ENCODE measurements at regions of chr9 and their contacts with region 1.

Region 1: GRCh38 chr9:127311239-127311741 is 46.7 kb downstream of the GARNL3 start:
- DNase-seq: no peak
- ATAC-seq: peak; percentile 41

Region 2: DNA sequence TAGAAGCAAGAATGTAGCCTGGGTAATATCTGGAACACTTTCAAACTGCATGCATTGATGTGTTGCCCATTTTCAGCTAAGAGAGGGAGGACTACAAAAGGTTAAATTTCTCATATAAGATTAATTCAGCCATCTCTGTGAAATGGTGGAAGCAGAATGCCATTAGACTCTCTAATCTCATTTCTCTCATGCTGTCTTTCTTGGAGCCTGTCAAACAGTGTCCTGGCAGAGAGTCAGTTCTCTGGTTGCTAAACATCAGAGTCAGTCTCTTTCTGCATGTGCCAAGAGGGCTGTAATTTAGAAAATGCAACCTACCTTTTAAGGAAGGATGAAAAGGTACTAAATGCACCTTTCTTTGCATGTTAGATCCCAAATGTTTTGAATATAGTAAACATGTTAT is 47.6 kb before region 1 on chr9:
- intact Hi-C with region 1: loop called (anchors 1 kb)
- DNase-seq: no peak
- ATAC-seq: peak; percentile 71

Region 3: GRCh38 chr9:127293328-127293727 is 18.0 kb before region 1 on chr9:
- intact Hi-C with region 1: no loop called
- DNase-seq: no peak
- ATAC-seq: no peak

Region 4: GRCh38 chr9:127360829-127361228 is 49.5 kb after region 1 on chr9:
- intact Hi-C with region 1: loop called (anchors 2 kb)
- DNase-seq: no peak
- ATAC-seq: peak; percentile 55

Region 5: GRCh38 chr9:127723450-127723849 is 412.2 kb after region 1 on chr9:
- intact Hi-C with region 1: no loop called
- DNase-seq: no peak
- ATAC-seq: no peak